WTC11 (cell line): ENCODE measurements at regions of chr22 and their contacts with region 1.

Region 1: GRCh38 chr22:42116848-42117424 is 13.7 kb downstream of the CYP2D6 start:
- DNase-seq: peak; percentile 62
- ATAC-seq: peak; percentile 72
- H3K4me3 Mint-ChIP-seq: no peak overlapping the region
- H3K27ac Mint-ChIP-seq: no peak overlapping the region
- H3K4me1 Mint-ChIP-seq: peaks cover 11% of the 10 kb centered on the region
- H3K27me3 Mint-ChIP-seq: peaks cover 31% of the 10 kb centered on the region
- CTCF ChIP-seq: no peak

Region 2: DNA sequence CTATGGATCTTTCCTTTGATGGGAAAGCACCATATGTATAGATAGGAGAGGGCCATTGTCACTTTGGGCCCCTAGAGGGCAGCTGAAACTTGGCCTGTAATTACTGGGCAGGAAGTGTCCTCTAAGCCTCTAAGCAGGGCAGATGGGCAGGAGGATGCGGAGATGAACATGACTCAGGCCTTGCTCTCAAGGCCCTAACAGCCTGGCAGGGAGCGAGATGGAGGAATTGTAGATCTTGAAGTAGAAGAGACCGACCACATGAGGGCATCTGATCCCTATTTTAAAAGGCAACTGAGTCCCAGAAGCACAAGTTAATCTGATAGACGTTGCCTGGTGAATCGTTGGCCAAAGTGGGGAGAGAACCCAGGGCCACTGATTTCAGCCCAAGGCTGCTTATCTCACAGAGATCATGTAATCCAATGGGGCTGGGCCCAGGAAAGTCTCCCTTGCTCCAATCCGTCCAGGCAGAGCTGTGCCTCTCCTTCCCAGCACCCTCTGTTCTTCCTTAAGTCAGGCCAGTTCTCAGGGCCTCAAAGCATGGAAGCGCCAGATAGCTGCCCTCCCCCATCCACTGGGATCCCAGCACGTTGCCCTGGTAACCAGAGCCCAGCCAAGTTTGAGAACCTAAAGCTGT is 150.2 kb before region 1 on chr22:
- CTCF ChIA-PET with region 1: interaction called, 78 read pairs
- POLR2A ChIA-PET with region 1: no interaction called
- DNase-seq: peak; percentile 40
- ATAC-seq: peak; percentile 80
- H3K4me3 Mint-ChIP-seq: no peak overlapping the region
- H3K27ac Mint-ChIP-seq: 0 out of 2 replicates have a peak overlapping the region, but pooled peaks have one; percentile 9
- H3K4me1 Mint-ChIP-seq: peaks cover 18% of the 10 kb centered on the region
- H3K27me3 Mint-ChIP-seq: peaks cover 29% of the 10 kb centered on the region
- CTCF ChIP-seq: no peak

Region 3: DNA sequence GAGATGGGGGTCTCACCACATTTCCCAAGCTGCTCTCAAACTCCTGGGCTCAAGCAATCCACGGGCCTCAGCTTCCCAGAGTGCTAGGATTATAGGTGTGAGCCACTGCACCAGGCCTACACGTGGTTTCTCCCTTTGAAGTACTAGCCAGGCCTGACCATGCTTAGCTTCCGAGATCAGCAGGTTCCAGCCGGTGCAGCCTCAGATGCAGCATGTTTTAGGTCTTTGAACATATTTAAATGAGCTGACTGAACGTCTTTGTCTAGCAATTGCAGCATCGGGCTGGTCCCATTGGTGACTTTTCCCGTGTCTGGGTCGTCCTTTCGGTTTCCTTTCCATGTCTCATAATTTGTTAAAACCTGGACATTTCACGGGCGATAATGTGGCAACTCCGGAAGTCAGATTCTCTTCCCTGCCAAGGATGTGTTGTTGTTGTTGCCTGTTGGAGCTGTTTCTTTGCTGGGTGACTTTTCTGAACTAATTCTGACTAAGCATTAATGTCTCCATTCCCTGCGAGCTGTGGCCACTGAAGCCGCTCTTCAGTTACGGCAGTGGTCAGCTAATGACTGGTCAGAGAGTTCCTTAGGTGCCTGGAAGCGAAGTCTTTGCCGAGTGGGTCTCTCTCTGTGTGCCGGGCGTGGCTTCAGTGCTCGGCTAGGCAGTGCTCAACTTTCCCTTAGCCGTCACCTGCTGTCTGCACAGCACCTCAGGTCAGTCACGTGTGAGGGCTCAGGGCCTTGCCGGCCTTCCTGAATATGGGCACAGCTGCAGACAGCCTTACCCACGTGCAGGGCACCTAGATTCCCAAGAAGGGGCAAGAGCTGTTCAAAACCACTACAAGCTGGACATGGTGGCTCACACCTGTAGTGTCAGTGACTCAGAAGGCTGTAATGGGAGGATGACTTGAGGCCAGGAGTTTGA is 17.4 kb after region 1 on chr22:
- CTCF ChIA-PET with region 1: interaction called, 32 read pairs
- POLR2A ChIA-PET with region 1: no interaction called
- DNase-seq: no peak
- ATAC-seq: no peak
- H3K4me3 Mint-ChIP-seq: no peak overlapping the region
- H3K27ac Mint-ChIP-seq: no peak overlapping the region
- H3K4me1 Mint-ChIP-seq: no peaks in the 10 kb centered on the region
- H3K27me3 Mint-ChIP-seq: peaks cover 46% of the 10 kb centered on the region
- CTCF ChIP-seq: no peak

Region 4: GRCh38 chr22:42437488-42438292 is 320.8 kb after region 1 on chr22:
- CTCF ChIA-PET with region 1: interaction called, 54 read pairs
- POLR2A ChIA-PET with region 1: no interaction called
- DNase-seq: peak; percentile 89
- ATAC-seq: peak; percentile 69
- H3K4me3 Mint-ChIP-seq: peak overlapping the region; percentile 70
- H3K27ac Mint-ChIP-seq: 0 out of 2 replicates have a peak overlapping the region, but pooled peaks have one; percentile 27
- H3K4me1 Mint-ChIP-seq: peaks cover 37% of the 10 kb centered on the region
- H3K27me3 Mint-ChIP-seq: peaks cover 20% of the 10 kb centered on the region
- CTCF ChIP-seq: peak; percentile 97

Region 5: GRCh38 chr22:42473484-42474193 is 356.7 kb after region 1 on chr22:
- CTCF ChIA-PET with region 1: interaction called, 11 read pairs
- POLR2A ChIA-PET with region 1: no interaction called
- DNase-seq: no peak
- ATAC-seq: peak; percentile 76
- H3K4me3 Mint-ChIP-seq: no peak overlapping the region
- H3K27ac Mint-ChIP-seq: no peak overlapping the region
- H3K4me1 Mint-ChIP-seq: peaks cover 4% of the 10 kb centered on the region
- H3K27me3 Mint-ChIP-seq: peaks cover 21% of the 10 kb centered on the region
- CTCF ChIP-seq: peak; percentile 31